Heart right ventricle (tissue), 16 donors: ENCODE measurements at regions of chr17 and their contacts with region 1.

Region 1: GRCh38 chr17:1275962-1276736 is 3.3 kb upstream of the TRARG1 start:
- DNase-seq: peak; percentile 63 to 76
- ATAC-seq: peak; percentile 43 to 84 (median 70)
- H3K4me3 ChIP-seq: no peak overlapping the region
- H3K27ac ChIP-seq: no peak overlapping the region
- H3K4me1 ChIP-seq: peaks cover 0 to 7% (median 0%) of the 10 kb centered on the region in 9 donors
- H3K27me3 ChIP-seq: peaks cover 0 to 44% (median 38%) of the 10 kb centered on the region in 7 donors
- CTCF ChIP-seq: peak; percentile 67 to 88 (median 82)

Region 2: GRCh38 chr17:1153795-1154546 is 122.2 kb before region 1 on chr17:
- intact Hi-C with region 1: no loop called
- DNase-seq: peak in 1 of 2 donors; percentile 64
- ATAC-seq: peak in 1 of 8 donors; percentile 26
- H3K4me3 ChIP-seq: no peak overlapping the region
- H3K27ac ChIP-seq: peak overlapping the region in 1 of 10 donors; percentile 13
- H3K4me1 ChIP-seq: peaks cover 0 to 40% (median 29%) of the 10 kb centered on the region in 9 donors
- H3K27me3 ChIP-seq: no peaks in the 10 kb centered on the region
- CTCF ChIP-seq: no peak

Region 3: DNA sequence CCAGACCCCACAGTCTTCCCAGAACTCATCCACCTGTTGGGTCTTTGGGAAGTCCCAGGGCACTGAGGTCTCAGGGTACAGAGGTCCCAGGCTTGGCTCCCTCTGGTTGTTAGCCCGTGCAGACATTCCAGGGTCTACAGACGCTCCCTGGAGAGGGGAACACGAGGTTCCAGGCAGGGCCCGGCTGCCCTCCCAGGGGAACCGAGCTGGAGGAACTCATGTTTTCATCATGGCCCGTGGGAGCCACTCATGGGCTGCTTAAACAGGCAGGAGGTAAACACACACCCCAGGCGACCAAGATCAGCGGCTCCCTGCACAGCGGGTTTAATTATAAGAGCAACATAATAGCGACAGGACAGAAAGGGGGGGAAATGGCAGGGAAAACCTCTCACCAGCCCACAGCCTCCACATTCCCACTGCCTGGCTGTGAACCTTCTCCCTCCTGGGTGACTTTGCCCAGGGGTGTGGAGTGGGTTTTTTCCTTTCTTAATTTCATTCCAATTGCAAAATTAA is 39.8 kb after region 1 on chr17:
- intact Hi-C with region 1: loop called in 1 of 10 experiments (anchors 5 kb)
- DNase-seq: peak; percentile 23 to 69
- ATAC-seq: peak; percentile 37 to 65 (median 47)
- H3K4me3 ChIP-seq: no peak overlapping the region
- H3K27ac ChIP-seq: peak overlapping the region in 4 of 10 donors; percentile 1 to 71 (median 48)
- H3K4me1 ChIP-seq: peaks cover 0 to 26% (median 15%) of the 10 kb centered on the region in 9 donors
- H3K27me3 ChIP-seq: peaks cover 0 to 27% (median 12%) of the 10 kb centered on the region in 7 donors
- CTCF ChIP-seq: no peak

Region 4: DNA sequence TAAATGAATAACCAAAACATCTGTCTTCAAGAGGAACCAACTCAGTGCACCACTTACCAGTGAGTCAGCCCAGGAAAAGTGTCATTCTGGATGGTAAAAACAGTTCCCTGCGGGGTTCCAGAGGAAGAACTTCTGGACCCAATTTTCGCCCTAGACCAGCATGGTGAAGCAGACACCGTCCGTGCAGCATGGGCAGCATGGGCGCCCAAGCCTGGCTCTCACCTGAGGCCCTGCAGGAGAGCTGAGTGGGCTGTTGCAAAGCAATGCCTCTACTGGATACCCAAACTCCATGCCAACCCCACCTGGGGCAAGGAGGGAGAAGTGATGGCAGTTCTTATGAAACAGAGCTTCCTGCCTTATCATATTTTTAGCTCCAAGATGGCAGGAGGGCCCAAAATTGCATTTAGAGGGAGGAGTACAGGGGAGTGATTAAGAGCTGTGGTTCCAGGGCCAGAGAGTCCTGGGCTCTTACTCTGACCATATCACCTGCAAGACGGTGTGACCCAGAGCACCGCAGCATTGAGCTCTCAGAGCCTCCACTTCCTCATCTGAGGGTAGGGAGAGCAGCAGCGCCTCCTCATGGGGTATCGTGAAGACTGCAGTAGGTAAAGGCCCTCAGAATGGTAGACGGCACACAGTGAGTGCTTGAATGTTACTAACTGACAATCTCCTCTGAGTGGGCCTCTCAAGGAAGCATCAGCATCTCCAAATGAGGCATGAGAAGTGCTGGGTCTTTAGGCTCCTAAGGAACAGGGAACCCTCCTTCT is 256.9 kb after region 1 on chr17:
- intact Hi-C with region 1: loop called in 2 of 10 experiments (anchors 10 kb)
- DNase-seq: no peak
- ATAC-seq: peak in 7 of 8 donors; percentile 49 to 81 (median 72)
- H3K4me3 ChIP-seq: no peak overlapping the region
- H3K27ac ChIP-seq: peak overlapping the region; percentile 20 to 79 (median 47)
- H3K4me1 ChIP-seq: peaks cover 0 to 18% (median 5%) of the 10 kb centered on the region in 9 donors
- H3K27me3 ChIP-seq: no peaks in the 10 kb centered on the region
- CTCF ChIP-seq: peak in 7 of 9 donors; percentile 26 to 55 (median 44)

Region 5: DNA sequence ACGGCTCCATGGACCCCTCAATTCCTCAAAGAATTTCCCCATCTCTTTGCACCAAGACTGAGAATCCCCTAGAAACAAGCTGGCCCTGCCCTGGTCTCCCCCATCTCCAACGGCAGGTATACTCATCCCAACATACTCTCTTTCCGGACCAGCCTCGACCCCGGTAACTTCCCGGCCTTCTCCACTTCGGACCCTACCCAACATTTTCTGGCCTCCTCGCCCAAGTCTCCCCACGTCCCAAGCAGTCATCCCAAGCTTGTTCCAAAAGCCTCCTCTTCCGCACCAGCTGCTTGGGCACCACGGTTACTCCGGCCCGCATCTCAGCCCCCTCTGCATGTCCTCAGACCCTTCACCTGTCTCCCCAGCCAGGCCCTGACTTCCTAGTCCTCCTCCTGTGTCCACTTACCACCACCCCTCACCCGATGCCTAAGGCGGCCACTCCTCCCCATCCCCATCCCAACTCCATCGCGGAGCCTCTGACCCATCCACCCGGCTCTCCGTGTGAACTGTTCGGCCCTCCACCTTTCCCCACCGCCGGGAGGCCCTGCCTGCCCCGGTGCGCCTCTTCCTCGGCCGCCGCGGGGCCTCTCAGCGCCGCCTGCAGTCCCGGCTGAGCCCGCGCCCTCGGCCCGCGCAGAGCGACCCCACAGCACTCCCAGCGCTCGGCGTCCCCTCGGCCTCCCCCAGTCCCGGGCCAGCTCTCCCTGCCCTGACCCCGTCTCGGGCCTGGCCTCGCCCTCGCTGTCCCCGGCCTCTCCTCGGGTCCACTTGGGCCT is 285.4 kb after region 1 on chr17:
- intact Hi-C with region 1: loop called in 1 of 10 experiments (anchors 10 kb)
- DNase-seq: peak in 1 of 2 donors; percentile 33
- ATAC-seq: peak; percentile 5 to 47 (median 28)
- H3K4me3 ChIP-seq: peak overlapping the region; percentile 50 to 91 (median 85)
- H3K27ac ChIP-seq: peak overlapping the region; percentile 24 to 92 (median 86)
- H3K4me1 ChIP-seq: peaks cover 4 to 55% (median 34%) of the 10 kb centered on the region in 9 donors
- H3K27me3 ChIP-seq: no peaks in the 10 kb centered on the region
- CTCF ChIP-seq: peak in 6 of 9 donors; percentile 8 to 51 (median 38)